Aorta (tissue), 5 donors: ENCODE measurements at regions of chr19 and their contacts with region 1.

Region 1: GRCh38 chr19:43668406-43669158 is 1.4 kb downstream of the PLAUR start:
- DNase-seq: peak; percentile 99 to 100
- ATAC-seq: peak; percentile 96
- H3K4me3 ChIP-seq: peak overlapping the region; percentile 11 to 81
- H3K27ac ChIP-seq: peak overlapping the region in 1 of 2 donors; percentile 60
- H3K4me1 ChIP-seq: peaks cover 0 to 1% of the 10 kb centered on the region in 2 donors
- H3K27me3 ChIP-seq: no peaks in the 10 kb centered on the region

Region 2: GRCh38 chr19:43619262-43620060 is 49.1 kb before region 1 on chr19 and contains the start of gene ZNF428:
- intact Hi-C with region 1: loop called in 1 of 2 experiments (anchors 2 kb)
- DNase-seq: peak; percentile 92 to 94
- ATAC-seq: peak; percentile 93
- H3K4me3 ChIP-seq: peak within 1 kb of the TSS; percentile 43 to 52
- H3K27ac ChIP-seq: peak within 1 kb of the TSS; percentile 1 to 69
- H3K4me1 ChIP-seq: no peaks in the 10 kb centered on the region
- H3K27me3 ChIP-seq: no peaks in the 10 kb centered on the region
- total RNA-seq, gene ZNF428: 26.2 to 34.6 TPM

Region 3: DNA sequence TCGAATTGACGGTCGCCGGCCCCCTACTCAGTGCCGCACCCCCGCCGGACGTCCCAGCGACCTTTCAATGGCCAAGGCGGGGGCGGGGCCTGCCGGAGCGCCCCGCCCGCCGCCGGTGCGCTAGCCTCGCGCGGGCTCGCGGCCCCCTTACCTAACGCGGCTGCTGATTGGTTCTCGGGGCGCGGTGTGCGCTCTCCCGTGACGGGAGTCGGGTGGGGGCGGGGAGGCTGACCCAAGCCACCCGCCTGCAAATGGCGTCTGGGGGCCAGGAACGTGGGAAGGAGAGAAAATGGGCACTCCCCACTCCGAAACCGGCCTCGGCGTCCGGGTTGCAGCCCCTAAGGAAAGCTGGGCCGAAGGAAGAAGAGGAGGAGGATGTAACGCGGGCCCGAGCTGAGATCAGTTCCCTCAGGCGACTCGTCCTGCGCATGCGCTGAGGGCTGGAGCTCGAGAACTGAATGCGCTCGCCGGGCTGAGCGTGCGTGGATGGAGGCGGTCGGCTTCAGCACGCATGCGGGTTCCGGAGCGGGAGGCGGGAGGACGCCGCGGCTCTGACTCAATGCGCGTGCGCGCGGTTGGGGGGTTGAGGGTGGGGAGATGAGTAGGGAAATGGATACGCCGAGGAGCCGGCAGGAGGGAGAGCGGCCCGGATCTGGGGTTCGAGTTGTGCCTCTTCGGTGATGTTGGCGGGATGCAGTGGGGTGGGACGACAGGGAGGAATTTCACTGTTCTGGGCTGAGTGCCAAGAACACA is 86.1 kb after region 1 on chr19 and contains the start of gene SMG9:
- intact Hi-C with region 1: loop called in 1 of 2 experiments (anchors 1 kb)
- DNase-seq: peak; percentile 99 to 100
- ATAC-seq: peak; percentile 97
- H3K4me3 ChIP-seq: peak within 1 kb of the TSS; percentile 46 to 52
- H3K27ac ChIP-seq: peak within 1 kb of the TSS in 1 of 2 donors; percentile 88
- H3K4me1 ChIP-seq: peaks cover 0 to 3% of the 10 kb centered on the region in 2 donors
- H3K27me3 ChIP-seq: no peaks in the 10 kb centered on the region
- total RNA-seq, gene SMG9: 29.2 to 50.6 TPM